GM12878 (cell line): ENCODE measurements at regions of chr7 and their contacts with region 1.

Region 1: GRCh38 chr7:3154912-3155494 is 111.3 kb upstream of the CARD11 start:
- DNase-seq: peak; percentile 15
- ATAC-seq: peak; percentile 75
- H3K4me3 ChIP-seq: no peak overlapping the region
- H3K27ac ChIP-seq: no peak overlapping the region
- H3K4me1 ChIP-seq: no peaks in the 10 kb centered on the region
- H3K27me3 ChIP-seq: no peaks in the 10 kb centered on the region
- CTCF ChIP-seq: peak; percentile 74 to 78 (median 77)
- EP300 ChIP-seq: no peak
- POLR2A ChIP-seq: no peak
- RAD21 ChIP-seq: peak; percentile 94

Region 2: DNA sequence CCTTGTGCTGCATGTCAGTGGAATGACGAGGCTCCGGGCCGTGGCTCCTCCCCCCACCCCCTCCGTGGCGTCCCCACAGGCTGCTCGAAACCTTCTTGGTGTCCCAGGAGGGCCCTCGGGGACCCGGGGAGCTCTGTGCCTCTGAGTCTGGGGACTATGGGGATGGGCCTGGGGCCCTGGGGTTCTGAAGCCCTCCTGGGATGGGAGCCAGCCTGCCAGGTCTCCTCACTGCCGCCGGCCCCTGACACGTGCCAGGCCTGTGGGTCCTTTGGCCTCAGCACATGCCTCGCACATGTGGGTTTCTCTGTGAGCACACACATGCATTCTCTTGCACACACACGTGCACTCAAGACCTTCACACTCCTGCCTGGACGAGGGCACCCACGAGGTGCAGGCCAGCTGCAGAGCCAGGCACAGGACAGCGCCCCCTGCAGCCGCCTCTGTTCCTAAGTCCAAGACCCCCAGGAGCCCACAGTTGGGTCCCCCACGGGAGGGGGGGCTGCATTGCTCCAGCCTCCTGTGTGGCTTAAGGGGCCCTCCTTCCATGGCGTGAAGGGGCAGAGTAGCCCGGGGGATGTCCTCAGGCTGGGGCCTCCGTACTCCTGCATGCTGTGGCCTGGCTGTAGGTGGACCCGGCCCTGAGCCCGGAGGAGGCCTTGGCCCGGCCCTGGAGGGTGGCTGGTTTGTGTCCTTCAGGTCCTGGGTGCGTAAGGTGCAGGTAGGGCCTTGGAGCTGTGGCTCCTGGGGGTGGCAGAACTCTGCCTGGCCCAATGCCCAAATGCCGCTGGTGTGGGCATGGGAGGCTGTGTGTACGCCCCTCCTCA is 494.2 kb before region 1 on chr7:
- CTCF ChIA-PET with region 1: no interaction called
- POLR2A ChIA-PET with region 1: no interaction called
- RAD21 ChIA-PET with region 1: no interaction called
- SMC1A ChIA-PET with region 1: no interaction called
- in situ Hi-C with region 1: no loop called
- intact Hi-C with region 1: loop called (anchors 10 kb)
- DNase-seq: no peak
- ATAC-seq: peak; percentile 30
- H3K4me3 ChIP-seq: no peak overlapping the region
- H3K27ac ChIP-seq: no peak overlapping the region
- H3K4me1 ChIP-seq: no peaks in the 10 kb centered on the region
- H3K27me3 ChIP-seq: no peaks in the 10 kb centered on the region
- CTCF ChIP-seq: peak; percentile 17 to 27 (median 21); a peak in 3 of 6 replicates
- EP300 ChIP-seq: no peak
- POLR2A ChIP-seq: no peak
- RAD21 ChIP-seq: no peak

Region 3: DNA sequence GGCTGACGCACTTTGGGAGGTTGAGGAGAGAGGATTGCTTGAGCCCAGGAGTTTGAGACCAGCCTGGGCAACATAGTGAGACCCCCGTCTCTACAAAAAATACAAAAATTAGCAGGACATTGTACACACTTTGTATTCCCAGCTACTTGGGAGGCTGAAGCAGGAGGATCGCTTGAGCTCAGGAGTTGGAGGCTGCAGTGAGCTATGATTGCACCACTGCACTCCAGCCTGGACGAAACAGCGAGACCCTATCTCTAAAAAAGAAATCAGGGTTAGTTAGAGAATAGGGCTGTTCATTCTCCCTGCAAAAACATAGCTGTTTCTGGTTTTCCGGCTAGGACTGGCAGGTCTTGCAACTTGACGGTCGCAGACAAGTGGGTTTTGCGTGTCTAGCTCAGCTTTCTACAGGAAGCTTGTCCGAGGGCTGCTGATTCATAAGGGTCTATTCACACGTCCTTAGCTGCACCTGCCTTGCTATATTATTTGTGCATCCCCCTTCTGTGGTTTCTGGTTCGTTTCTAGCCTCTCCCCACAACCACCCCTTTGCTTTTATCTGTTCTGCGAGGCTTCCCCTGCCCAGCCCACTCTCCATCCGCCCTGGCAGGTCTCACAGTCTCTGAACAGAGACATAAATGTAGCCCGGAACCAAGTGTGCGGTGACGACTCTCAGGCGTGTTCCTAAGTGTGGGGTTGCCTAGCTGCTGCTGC is 456.3 kb before region 1 on chr7:
- CTCF ChIA-PET with region 1: no interaction called
- POLR2A ChIA-PET with region 1: no interaction called
- RAD21 ChIA-PET with region 1: no interaction called
- SMC1A ChIA-PET with region 1: no interaction called
- in situ Hi-C with region 1: no loop called
- intact Hi-C with region 1: no loop called
- DNase-seq: peak; percentile 93
- ATAC-seq: peak; percentile 96
- H3K4me3 ChIP-seq: 0 out of 2 replicates have a peak overlapping the region, but pooled peaks have one; percentile 32
- H3K27ac ChIP-seq: peak overlapping the region; percentile 38; the same call in 1 of the 2 replicates
- H3K4me1 ChIP-seq: peaks cover 21% of the 10 kb centered on the region
- H3K27me3 ChIP-seq: no peaks in the 10 kb centered on the region
- CTCF ChIP-seq: no peak
- EP300 ChIP-seq: peak; percentile 88 to 98
- POLR2A ChIP-seq: no peak
- RAD21 ChIP-seq: 0 out of 2 replicates have a peak, but pooled peaks have one; percentile 5

Region 4: GRCh38 chr7:2886900-2887299 is 268.1 kb before region 1 on chr7:
- CTCF ChIA-PET with region 1: interaction called, 18 read pairs
- POLR2A ChIA-PET with region 1: no interaction called
- RAD21 ChIA-PET with region 1: interaction called, 13 read pairs
- SMC1A ChIA-PET with region 1: interaction called, 12 read pairs
- in situ Hi-C with region 1: loop called (anchors 5 kb)
- intact Hi-C with region 1: loop called (anchors 1 kb)
- DNase-seq: no peak
- ATAC-seq: peak; percentile 93
- H3K4me3 ChIP-seq: no peak overlapping the region
- H3K27ac ChIP-seq: no peak overlapping the region
- H3K4me1 ChIP-seq: no peaks in the 10 kb centered on the region
- H3K27me3 ChIP-seq: no peaks in the 10 kb centered on the region
- CTCF ChIP-seq: peak; percentile 88 to 94 (median 88)
- EP300 ChIP-seq: no peak
- POLR2A ChIP-seq: no peak
- RAD21 ChIP-seq: peak; percentile 94

Region 5: GRCh38 chr7:2894118-2894940 is 260.7 kb before region 1 on chr7:
- CTCF ChIA-PET with region 1: interaction called, 18 read pairs
- POLR2A ChIA-PET with region 1: interaction called, 7 read pairs
- RAD21 ChIA-PET with region 1: interaction called, 17 read pairs
- SMC1A ChIA-PET with region 1: interaction called, 22 read pairs
- in situ Hi-C with region 1: loop called (anchors 5 kb)
- intact Hi-C with region 1: no loop called
- DNase-seq: peak; percentile 51
- ATAC-seq: peak; percentile 86
- H3K4me3 ChIP-seq: peak overlapping the region; percentile 51
- H3K27ac ChIP-seq: peak overlapping the region; percentile 84
- H3K4me1 ChIP-seq: peaks cover 23% of the 10 kb centered on the region
- H3K27me3 ChIP-seq: no peaks in the 10 kb centered on the region
- CTCF ChIP-seq: no peak
- EP300 ChIP-seq: peak; percentile 37 to 73; a peak in 1 of 4 replicates
- POLR2A ChIP-seq: peak; percentile 54
- RAD21 ChIP-seq: no peak